Activated CD4-positive, alpha-beta memory T cell treated with anti-CD3 and anti-CD28 coated beads for 36 hours (primary cell): ENCODE measurements at regions of chr12 and their contacts with region 1.

Region 1: DNA sequence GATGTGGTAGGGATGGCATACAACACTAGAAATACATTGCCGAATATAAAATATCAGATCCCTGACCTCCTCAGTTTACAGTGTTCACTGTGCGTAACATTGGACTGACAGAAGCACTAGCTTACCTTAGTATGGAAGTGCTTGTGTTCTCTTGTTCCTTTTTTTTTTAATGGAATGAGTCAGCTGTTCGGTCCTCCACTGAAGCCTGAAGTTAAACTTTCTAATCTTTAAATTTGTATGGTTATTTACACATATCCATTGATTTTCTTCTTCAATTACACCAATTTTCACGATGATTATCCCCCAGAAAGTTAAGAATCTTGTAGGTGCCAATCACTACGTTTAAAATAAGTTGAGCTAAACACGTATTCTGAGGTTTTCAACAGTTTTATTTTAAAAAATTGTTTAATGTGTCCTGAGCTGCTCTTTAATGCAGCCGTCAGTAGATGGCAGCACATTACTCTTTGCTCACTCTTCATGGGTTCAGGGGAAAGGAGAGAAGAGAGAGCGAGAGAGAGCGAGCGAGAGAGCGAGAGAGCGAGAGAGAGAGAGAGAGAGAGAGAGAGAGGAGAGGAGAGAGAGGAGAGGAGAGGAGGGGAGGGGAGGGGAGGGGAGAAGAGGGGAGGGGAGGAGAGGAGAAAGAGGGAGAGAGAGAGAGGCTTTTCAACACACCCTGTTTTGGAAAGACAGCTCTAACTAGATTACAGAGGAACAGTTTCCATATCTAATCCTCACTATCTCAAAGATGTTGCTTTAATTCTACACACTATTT is 134.7 kb upstream of the SCAF11 start:
- DNase-seq: peak; percentile 60
- H3K4me3 Mint-ChIP-seq: peak overlapping the region; percentile 34
- H3K27ac Mint-ChIP-seq: peak overlapping the region; percentile 21
- H3K4me1 Mint-ChIP-seq: peaks cover 5% of the 10 kb centered on the region
- H3K27me3 Mint-ChIP-seq: peaks cover 12% of the 10 kb centered on the region

Region 2: DNA sequence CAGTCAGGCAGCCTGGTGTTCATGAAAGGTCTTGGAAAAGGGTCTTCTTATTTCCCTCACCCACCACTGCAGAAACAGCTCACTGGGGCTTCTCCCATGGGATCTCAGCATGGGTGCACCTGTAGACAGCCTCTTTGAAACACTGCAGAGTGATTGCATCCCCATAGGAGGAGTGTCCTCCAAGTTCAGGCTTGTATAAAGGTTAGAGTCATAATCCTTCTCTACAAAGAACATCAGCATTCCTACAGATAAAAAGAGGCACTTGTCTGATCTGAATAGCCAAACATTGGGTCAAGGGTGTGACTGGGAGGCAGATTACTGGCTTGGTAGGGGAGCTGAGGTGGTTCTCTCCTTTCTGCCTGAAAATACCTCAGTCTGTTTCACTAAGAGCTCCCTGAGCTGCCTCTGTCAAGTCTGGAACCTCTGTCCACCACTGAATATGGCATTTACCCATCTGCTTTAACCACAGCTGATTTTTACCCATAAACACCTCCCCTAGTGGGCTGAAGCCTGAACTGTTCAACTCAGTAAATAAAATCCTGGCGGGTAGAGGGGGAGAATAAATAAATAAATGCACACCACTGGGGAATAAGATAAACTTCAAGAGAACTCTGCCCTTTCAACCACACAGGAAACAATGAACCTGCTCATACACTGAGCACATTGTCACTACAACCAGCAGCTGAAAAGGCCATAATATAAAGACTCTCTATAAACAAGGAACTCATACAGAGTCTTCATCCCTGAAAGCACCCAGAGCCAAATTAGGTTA is 13.9 kb before region 1 on chr12:
- CTCF ChIA-PET with region 1: interaction called, 19 read pairs
- POLR2A ChIA-PET with region 1: no interaction called
- intact Hi-C with region 1: no loop called
- DNase-seq: no peak
- H3K4me3 Mint-ChIP-seq: no peak overlapping the region
- H3K27ac Mint-ChIP-seq: no peak overlapping the region
- H3K4me1 Mint-ChIP-seq: no peaks in the 10 kb centered on the region
- H3K27me3 Mint-ChIP-seq: peaks cover 9% of the 10 kb centered on the region

Region 3: DNA sequence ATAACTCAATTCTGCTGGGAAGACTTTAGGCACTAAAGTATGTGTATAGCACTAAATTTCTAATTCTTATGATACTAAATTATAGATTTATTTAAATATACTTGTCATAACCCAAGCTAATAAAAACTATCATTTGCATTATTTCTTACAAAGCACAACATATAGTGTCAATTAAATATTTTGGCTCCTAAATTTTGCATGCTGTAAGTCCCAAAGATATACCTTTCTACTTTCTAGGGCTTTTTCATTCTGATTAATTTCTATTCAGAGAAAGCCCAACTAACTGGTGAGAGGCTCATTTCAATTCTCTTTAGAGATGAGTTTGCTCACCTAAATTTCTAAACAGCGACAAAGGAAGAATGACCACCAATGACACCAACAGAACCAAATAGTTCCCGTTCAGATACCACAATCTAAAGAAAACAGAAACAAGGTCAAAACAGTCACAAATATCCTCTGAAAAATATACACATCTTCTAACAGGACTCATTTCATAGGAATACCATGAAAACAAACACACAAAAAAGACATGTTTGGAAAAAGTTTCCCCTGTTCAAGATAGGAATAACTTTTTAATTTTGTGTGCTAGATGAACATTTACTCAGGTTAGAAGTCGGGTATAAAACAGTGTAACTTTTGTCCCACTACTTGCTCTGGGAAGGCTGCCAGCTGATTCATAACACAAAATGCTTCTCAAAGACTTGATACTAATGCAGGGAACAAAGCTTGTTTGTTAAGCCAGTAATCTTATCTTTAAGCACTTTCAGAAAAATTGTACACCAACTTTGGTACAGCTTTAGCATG is 239.9 kb after region 1 on chr12:
- CTCF ChIA-PET with region 1: interaction called, 10 read pairs
- POLR2A ChIA-PET with region 1: no interaction called
- intact Hi-C with region 1: no loop called
- DNase-seq: no peak
- H3K4me3 Mint-ChIP-seq: no peak overlapping the region
- H3K27ac Mint-ChIP-seq: peak overlapping the region; percentile 72
- H3K4me1 Mint-ChIP-seq: peaks cover 81% of the 10 kb centered on the region
- H3K27me3 Mint-ChIP-seq: no peaks in the 10 kb centered on the region

Region 4: DNA sequence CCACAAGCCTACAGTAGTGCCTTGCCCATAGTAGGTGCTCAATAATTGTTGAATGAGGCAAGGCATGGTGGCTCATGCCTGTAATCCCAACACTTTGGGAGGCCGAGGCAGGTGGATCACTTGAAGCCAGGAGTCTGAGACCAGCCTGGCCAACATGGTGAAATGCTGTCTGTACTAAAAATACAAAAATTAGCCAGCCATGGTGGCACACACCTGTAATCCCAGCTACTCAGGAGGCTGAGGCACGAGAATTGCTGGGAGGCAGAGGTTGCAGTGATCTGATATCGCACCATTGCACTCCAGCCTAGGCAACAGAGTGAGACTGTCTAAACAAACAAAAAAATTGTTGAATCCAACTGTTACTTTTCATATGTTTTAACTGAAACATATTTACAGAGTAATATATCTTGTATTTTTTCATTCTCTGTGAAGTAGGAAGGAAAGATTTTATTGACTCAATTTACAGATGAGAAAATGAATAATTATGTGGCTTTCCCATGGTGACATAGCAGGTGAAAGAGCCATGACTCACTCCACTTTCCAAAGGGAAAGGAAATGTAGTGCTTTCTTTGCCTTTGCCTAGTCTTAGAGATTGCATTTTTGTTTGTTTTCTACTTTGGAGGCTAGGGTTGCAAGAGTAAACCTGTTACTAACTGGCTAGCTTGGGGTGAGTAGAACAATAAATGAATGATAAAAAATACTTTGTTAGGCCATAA is 796.2 kb after region 1 on chr12:
- CTCF ChIA-PET with region 1: no interaction called
- POLR2A ChIA-PET with region 1: no interaction called
- intact Hi-C with region 1: no loop called
- DNase-seq: no peak
- H3K4me3 Mint-ChIP-seq: no peak overlapping the region
- H3K27ac Mint-ChIP-seq: no peak overlapping the region
- H3K4me1 Mint-ChIP-seq: no peaks in the 10 kb centered on the region
- H3K27me3 Mint-ChIP-seq: no peaks in the 10 kb centered on the region

Region 5: DNA sequence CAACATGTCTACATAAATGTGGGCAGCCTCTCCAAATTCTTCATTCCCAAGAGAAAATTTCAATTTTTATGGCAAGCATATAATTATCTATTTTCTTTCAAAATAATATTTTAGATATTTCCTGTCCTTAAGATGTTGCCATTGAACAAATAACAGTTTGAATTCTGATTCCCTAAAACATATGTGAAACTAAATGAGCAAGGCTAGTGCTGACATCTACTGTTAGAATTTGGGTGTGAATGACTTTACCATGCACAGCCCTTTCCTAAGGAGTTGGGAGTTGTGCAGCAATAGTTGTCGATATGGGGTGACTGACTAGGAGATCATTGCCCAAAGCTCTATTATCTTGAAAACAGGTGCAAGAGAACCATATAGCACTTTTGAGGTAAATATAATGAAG is 808.9 kb after region 1 on chr12:
- CTCF ChIA-PET with region 1: interaction called, 11 read pairs
- POLR2A ChIA-PET with region 1: no interaction called
- intact Hi-C with region 1: loop called (anchors 5 kb)
- DNase-seq: no peak
- H3K4me3 Mint-ChIP-seq: no peak overlapping the region
- H3K27ac Mint-ChIP-seq: no peak overlapping the region
- H3K4me1 Mint-ChIP-seq: no peaks in the 10 kb centered on the region
- H3K27me3 Mint-ChIP-seq: peaks cover 12% of the 10 kb centered on the region

Region 6: DNA sequence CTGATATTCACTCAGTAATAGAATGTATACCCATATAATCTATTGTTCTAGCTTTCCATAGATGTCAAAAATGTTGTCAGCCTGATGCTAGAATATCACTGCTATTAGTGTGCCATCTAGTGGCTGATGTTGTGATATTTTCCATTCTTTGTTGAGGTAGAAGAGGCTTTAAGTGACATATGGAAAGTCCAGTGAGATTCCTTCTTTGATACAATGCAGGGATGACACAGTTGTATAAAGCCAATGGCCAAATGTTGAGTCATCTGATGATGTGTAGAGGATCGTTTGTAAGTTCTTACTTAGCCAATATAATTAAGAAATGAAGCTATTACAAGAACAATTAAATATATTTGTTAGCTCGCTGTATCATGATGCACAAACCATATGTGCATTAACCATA is 896.3 kb after region 1 on chr12:
- CTCF ChIA-PET with region 1: interaction called, 20 read pairs
- POLR2A ChIA-PET with region 1: no interaction called
- intact Hi-C with region 1: loop called (anchors 10 kb)
- DNase-seq: no peak
- H3K4me3 Mint-ChIP-seq: no peak overlapping the region
- H3K27ac Mint-ChIP-seq: no peak overlapping the region
- H3K4me1 Mint-ChIP-seq: peaks cover 7% of the 10 kb centered on the region
- H3K27me3 Mint-ChIP-seq: peaks cover 23% of the 10 kb centered on the region